MCF 10A (cell line): ENCODE measurements at regions of chr15 and their contacts with region 1.

Region 1: DNA sequence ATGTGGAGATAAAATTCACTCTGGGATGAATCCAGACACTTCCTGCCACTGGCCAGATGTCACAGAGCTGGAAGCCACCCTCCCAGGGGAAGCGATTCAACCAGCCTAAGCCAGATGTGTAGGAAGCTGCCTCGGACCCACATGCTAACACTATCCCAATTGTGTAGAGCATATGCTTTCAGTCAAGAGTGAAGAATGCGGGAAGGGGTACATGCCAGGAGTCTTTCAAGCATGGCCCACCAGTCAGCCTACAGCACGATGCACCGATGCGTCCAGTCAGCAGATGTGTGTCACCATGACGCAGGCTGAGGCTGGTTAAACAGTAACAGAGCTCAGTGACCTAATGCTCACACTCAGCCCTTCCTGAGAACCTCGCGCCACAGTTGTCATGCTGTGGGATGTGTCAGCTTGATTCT is 38.8 kb upstream of the BNC1 start:
- DNase-seq: peak; percentile 85
- H3K4me3 Mint-ChIP-seq: no peak overlapping the region
- H3K27ac Mint-ChIP-seq: peak overlapping the region; percentile 46
- H3K4me1 Mint-ChIP-seq: peaks cover 52% of the 10 kb centered on the region
- H3K27me3 Mint-ChIP-seq: no peaks in the 10 kb centered on the region
- CTCF ChIP-seq: no peak

Region 2: GRCh38 chr15:83278173-83278572 is 45.1 kb before region 1 on chr15:
- CTCF ChIA-PET with region 1: interaction called, 3 read pairs
- POLR2A ChIA-PET with region 1: interaction called, 53 read pairs
- intact Hi-C with region 1: no loop called
- DNase-seq: peak; percentile 70
- H3K4me3 Mint-ChIP-seq: no peak overlapping the region
- H3K27ac Mint-ChIP-seq: peak overlapping the region; percentile 99
- H3K4me1 Mint-ChIP-seq: peaks cover 41% of the 10 kb centered on the region
- H3K27me3 Mint-ChIP-seq: no peaks in the 10 kb centered on the region
- CTCF ChIP-seq: no peak

Region 3: DNA sequence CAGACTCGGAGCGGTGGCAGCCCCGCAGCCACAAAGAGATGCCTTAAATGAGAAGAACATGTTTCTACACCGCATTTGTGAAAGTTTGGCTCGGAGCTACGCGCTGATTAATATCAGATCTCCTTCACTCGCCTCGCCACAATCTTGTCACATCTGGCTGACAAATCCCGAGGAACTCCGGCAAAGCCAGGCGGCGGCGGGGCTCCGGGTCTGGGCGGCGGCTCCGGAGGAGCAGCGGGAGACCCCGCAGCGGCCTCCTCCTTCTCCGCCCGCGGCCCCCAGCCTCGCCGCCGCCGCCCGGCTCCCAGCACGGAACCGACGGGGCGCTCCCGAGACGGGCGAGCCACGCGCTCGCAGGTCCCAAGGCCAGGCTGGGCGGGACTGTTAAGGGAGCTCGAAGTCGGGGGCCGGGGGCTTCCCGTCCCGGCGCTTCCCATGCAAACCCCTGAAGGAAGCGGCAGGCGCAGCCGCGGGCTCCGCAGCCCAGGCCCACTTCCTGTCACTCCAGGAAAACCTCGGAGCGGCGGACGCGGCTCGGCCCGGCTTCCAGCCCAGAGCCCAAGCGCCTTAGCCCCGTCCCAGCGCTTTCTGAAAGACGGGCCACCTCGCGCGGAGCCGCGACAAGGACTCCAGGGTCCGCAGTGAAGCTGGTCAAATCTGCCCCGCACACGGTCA is 40.0 kb before region 1 on chr15:
- CTCF ChIA-PET with region 1: interaction called, 3 read pairs
- POLR2A ChIA-PET with region 1: interaction called, 53 read pairs
- intact Hi-C with region 1: loop called (anchors 5 kb)
- DNase-seq: no peak
- H3K4me3 Mint-ChIP-seq: peak overlapping the region; percentile 99
- H3K27ac Mint-ChIP-seq: peak overlapping the region; percentile 99
- H3K4me1 Mint-ChIP-seq: peaks cover 58% of the 10 kb centered on the region
- H3K27me3 Mint-ChIP-seq: no peaks in the 10 kb centered on the region
- CTCF ChIP-seq: no peak

Region 4: GRCh38 chr15:83288381-83288801 is 34.9 kb before region 1 on chr15:
- CTCF ChIA-PET with region 1: interaction called, 3 read pairs
- POLR2A ChIA-PET with region 1: interaction called, 53 read pairs
- intact Hi-C with region 1: loop called (anchors 5 kb)
- DNase-seq: peak; percentile 85
- H3K4me3 Mint-ChIP-seq: peak overlapping the region; percentile 28
- H3K27ac Mint-ChIP-seq: peak overlapping the region; percentile 71
- H3K4me1 Mint-ChIP-seq: peaks cover 59% of the 10 kb centered on the region
- H3K27me3 Mint-ChIP-seq: no peaks in the 10 kb centered on the region
- CTCF ChIP-seq: no peak

Region 5: DNA sequence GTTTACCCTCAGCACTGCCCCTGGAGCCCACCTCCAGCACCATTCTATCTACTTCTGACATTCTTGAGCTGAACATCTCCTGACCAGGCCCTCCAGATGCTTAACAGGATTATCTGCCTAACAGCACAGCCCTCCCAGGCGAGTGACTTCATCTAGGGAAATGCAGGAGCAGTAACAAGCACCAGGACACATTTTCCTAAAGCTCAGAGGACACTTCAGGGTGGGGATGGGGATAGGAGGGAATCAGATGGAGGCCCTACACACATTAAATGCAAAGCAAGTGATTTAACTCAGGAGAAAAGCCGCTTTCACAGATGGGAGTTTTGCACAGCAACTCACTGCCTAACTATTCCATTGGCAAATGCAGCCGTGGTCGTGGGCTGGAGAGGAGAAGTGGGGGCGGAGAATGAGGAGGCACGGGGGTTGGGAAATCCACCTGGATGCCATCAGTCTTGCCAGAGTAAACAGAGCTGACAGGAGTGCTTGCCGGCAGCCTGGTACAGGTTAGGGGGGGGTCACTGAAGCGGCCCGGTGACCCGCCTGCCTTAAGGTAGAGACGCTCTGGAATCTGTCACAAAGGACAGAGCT is 17.5 kb before region 1 on chr15:
- CTCF ChIA-PET with region 1: interaction called, 5 read pairs
- POLR2A ChIA-PET with region 1: interaction called, 54 read pairs
- intact Hi-C with region 1: no loop called
- DNase-seq: peak; percentile 89
- H3K4me3 Mint-ChIP-seq: peak overlapping the region; percentile 24
- H3K27ac Mint-ChIP-seq: peak overlapping the region; percentile 46
- H3K4me1 Mint-ChIP-seq: peaks cover 36% of the 10 kb centered on the region
- H3K27me3 Mint-ChIP-seq: no peaks in the 10 kb centered on the region
- CTCF ChIP-seq: no peak

Region 6: GRCh38 chr15:83356501-83357399 is 33.4 kb after region 1 on chr15:
- CTCF ChIA-PET with region 1: interaction called, 4 read pairs
- POLR2A ChIA-PET with region 1: interaction called, 6 read pairs
- intact Hi-C with region 1: loop called (anchors 5 kb)
- DNase-seq: no peak
- H3K4me3 Mint-ChIP-seq: no peak overlapping the region
- H3K27ac Mint-ChIP-seq: peak overlapping the region; percentile 63
- H3K4me1 Mint-ChIP-seq: peaks cover 22% of the 10 kb centered on the region
- H3K27me3 Mint-ChIP-seq: no peaks in the 10 kb centered on the region
- CTCF ChIP-seq: no peak

Region 7: DNA sequence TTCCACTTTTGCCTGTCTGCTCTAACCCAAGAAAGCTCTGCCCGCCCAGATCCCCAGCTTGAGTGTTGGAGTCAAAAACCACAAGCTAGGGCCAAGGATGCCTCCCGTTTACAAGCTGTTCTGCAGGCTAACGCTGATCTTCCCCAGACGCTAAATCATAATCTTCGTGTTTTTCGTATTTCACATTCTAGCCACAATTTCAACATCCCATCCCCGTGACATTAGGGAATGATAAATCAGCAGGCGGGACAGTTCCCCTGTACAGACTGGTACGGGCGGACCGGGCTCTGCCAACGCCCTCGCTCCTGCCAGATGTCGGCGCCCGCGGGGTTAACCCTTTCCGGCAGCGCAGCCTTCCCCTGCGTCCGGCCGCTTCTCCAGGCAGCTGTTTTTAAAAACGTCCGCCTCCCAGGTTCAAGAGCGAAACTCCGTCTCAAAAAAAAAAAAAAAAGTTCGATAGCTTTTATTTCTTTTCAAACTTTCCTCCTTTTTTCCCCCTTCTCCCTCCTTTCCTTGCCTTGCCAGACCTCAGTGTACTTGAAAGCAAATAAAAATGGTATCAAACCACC is 42.1 kb after region 1 on chr15:
- CTCF ChIA-PET with region 1: no interaction called
- POLR2A ChIA-PET with region 1: interaction called, 27 read pairs
- intact Hi-C with region 1: no loop called
- DNase-seq: peak; percentile 72
- H3K4me3 Mint-ChIP-seq: peak overlapping the region; percentile 74
- H3K27ac Mint-ChIP-seq: peak overlapping the region; percentile 95
- H3K4me1 Mint-ChIP-seq: peaks cover 29% of the 10 kb centered on the region
- H3K27me3 Mint-ChIP-seq: no peaks in the 10 kb centered on the region
- CTCF ChIP-seq: no peak

Region 8: GRCh38 chr15:83582381-83582780 is 259.1 kb after region 1 on chr15:
- CTCF ChIA-PET with region 1: no interaction called
- POLR2A ChIA-PET with region 1: no interaction called
- intact Hi-C with region 1: no loop called
- DNase-seq: no peak
- H3K4me3 Mint-ChIP-seq: no peak overlapping the region
- H3K27ac Mint-ChIP-seq: no peak overlapping the region
- H3K4me1 Mint-ChIP-seq: no peaks in the 10 kb centered on the region
- H3K27me3 Mint-ChIP-seq: no peaks in the 10 kb centered on the region
- CTCF ChIP-seq: no peak

Region 9: DNA sequence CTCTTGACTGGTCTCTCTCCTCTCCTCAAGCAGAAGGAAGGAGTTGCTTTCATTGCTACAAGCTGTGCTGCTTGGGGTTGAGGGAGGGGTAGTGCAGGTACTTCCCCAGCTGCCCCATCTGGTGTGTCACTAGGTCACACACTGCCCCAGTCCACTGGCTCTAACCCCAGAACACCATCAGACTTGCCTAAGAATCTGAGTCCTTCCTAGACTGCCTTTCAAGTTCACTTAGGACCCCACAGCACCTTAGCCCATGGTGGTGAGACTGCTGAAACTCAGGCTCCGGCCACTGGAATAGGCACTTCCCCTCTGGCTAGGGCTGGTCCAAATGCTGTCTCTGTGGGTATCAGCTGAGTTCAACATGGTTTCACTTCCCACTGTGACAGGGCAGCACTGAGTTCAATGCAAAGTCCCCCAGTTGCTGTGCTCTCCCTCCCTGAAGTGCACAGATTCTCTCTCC is 632.5 kb after region 1 on chr15:
- CTCF ChIA-PET with region 1: no interaction called
- POLR2A ChIA-PET with region 1: no interaction called
- intact Hi-C with region 1: no loop called
- DNase-seq: no peak
- H3K4me3 Mint-ChIP-seq: no peak overlapping the region
- H3K27ac Mint-ChIP-seq: no peak overlapping the region
- H3K4me1 Mint-ChIP-seq: no peaks in the 10 kb centered on the region
- H3K27me3 Mint-ChIP-seq: no peaks in the 10 kb centered on the region
- CTCF ChIP-seq: no peak